ENCODE measurements at regions of chr13 and their contacts with region 1.

Region 1: GRCh38 chr13:110715395-110716235 is 2.1 kb downstream of the ING1 start:
- DNase-seq: peak; percentile 99

Region 2: DNA sequence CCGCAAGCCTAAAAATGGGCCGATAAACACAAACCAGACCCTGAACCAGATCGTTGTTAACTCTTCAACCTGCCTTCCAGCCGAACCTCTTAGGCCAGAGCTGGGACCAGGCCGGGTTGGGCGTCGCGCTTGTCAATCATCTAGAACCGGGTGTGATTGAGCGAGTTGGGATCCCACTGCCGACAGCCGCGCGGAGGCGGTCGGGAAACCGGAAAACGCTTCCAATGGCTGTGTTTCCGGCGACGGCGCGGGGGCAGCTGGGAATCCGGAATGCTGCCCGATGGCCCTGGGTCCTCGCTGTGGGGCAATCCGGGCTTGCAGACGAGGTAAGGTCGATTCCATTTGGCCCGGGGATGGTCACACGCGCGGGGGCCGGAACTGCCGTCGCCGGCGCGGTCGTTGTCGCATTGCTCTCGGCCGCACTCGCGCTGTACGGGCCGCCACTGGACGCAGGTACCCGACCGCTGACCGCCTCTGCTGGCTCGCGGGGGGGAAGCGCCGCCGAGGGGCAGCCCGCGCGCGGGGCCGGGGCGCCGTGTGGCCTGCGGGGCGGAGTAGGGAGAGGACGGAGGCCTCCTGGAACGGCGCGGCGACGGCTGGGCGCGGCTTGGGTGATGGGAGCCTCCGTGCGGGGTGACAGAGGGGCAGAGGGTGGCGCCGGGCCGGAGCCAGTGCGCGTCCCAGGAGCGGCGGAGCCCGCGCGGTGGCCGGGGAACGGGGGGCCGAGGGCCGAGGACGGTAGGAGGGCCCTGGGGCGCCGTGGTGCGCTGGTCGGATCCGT is 100.1 kb before region 1 on chr13 and contains the start of gene NAXD:
- intact Hi-C with region 1: loop called (anchors 2 kb)
- DNase-seq: peak; percentile 95
- total RNA-seq, gene NAXD: 23.7 TPM

Region 3: DNA sequence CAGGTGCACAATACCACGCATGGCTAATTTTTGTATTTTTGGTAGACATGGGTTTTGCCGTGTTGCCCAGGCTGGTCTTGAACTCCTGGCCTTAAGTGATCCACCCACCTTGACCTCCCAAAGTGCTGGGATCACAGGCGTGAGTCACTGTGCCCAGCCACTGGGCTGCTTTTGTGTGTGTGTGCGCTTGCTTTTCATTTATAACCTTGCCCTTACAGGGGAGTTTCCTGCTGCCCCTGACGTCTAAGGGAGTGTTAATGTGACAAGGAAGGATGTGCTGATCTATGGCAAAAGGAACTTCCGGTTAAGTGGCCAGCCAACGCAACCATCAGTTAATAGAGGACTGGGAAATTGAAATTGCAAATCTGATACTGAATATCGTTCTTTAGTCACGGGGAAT is 55.6 kb after region 1 on chr13:
- intact Hi-C with region 1: no loop called
- DNase-seq: no peak

Region 4: GRCh38 chr13:110819203-110820014 is 103.8 kb after region 1 on chr13:
- intact Hi-C with region 1: loop called (anchors 5 kb)
- DNase-seq: peak; percentile 91

Region 5: DNA sequence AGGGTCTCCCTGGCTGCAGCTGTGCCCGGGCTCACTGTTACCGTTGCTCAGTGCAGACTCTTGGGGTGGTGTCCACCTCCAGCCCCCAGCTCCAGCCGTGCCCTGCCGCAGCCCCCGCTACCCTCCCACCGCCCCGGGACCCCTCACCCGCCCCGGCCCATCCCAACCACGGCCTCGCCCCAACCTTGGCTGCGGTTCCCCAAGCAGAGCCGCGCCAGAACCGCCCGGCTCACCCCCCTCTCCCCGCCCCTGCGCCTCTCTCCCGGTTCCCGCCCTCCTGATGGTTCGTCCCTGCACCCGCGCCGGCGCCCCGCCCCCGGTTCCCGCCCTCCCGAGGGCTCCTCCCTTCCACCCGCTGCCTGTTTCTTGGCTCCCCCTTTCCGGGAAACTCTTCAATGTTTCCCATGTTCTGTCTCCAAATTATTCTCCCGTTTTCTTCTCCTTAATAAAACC is 158.9 kb after region 1 on chr13:
- intact Hi-C with region 1: loop called (anchors 5 kb)
- DNase-seq: peak; percentile 88

Region 6: GRCh38 chr13:110915057-110915873 is 199.7 kb after region 1 on chr13 and contains the start of gene ANKRD10:
- intact Hi-C with region 1: loop called (anchors 1 kb)
- DNase-seq: peak; percentile 99
- total RNA-seq, gene ANKRD10: 84.4 TPM

Region 7: GRCh38 chr13:111006506-111007031 is 291.0 kb after region 1 on chr13:
- intact Hi-C with region 1: loop called (anchors 5 kb)
- DNase-seq: peak; percentile 90

Region 8: DNA sequence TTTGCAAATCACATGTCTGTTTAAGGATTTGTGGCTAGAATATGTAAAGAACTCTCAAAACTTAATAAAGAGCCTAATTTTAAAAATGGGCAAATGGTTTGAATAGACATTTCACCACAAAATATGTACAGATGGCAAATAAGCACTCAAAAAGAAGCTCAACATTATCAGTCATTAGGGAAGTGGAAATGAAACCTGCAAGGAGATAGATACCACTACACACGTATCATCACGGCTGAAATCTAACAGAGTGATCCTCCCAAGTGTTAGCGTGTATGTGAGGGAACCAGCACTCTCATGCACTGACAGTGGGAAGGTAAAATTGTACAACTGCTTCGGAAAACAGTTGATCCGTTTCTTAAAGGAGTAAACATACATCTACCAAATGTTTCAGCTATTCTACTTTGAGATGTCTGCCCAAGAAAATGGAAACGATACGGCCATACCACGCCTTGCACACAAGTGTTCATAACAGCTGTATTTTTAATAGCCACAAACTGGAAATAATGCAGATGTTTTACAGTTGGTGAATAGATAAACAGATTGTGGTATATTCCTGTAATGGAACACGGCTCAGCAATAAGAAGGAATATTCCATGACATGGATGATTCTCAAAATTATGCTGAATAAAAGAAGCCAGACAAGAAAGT is 414.0 kb after region 1 on chr13:
- intact Hi-C with region 1: no loop called
- DNase-seq: no peak

Measured in cardiac septum (tissue), 1 donor.